A673 (cell line): ENCODE measurements at regions of chr15 and their contacts with region 1.

Region 1: GRCh38 chr15:85730001-85730820 is 64.5 kb downstream of the KLHL25 start:
- DNase-seq: peak; percentile 75
- H3K4me3 ChIP-seq: no peak overlapping the region
- H3K27ac ChIP-seq: no peak overlapping the region
- H3K4me1 ChIP-seq: no peaks in the 10 kb centered on the region
- H3K27me3 ChIP-seq: no peaks in the 10 kb centered on the region
- CTCF ChIP-seq: peak; percentile 74

Region 2: GRCh38 chr15:85485956-85486567 is 244.1 kb before region 1 on chr15:
- CTCF ChIA-PET with region 1: no interaction called
- POLR2A ChIA-PET with region 1: no interaction called
- intact Hi-C with region 1: loop called (anchors 5 kb)
- DNase-seq: peak; percentile 82
- H3K4me3 ChIP-seq: no peak overlapping the region
- H3K27ac ChIP-seq: no peak overlapping the region
- H3K4me1 ChIP-seq: peaks cover 35% of the 10 kb centered on the region
- H3K27me3 ChIP-seq: no peaks in the 10 kb centered on the region
- CTCF ChIP-seq: peak; percentile 80

Region 3: GRCh38 chr15:85831415-85832113 is 101.4 kb after region 1 on chr15:
- CTCF ChIA-PET with region 1: interaction called, 9 read pairs
- POLR2A ChIA-PET with region 1: no interaction called
- intact Hi-C with region 1: loop called (anchors 1 kb)
- DNase-seq: peak; percentile 69
- H3K4me3 ChIP-seq: no peak overlapping the region
- H3K27ac ChIP-seq: no peak overlapping the region
- H3K4me1 ChIP-seq: no peaks in the 10 kb centered on the region
- H3K27me3 ChIP-seq: no peaks in the 10 kb centered on the region
- CTCF ChIP-seq: peak; percentile 75

Region 4: DNA sequence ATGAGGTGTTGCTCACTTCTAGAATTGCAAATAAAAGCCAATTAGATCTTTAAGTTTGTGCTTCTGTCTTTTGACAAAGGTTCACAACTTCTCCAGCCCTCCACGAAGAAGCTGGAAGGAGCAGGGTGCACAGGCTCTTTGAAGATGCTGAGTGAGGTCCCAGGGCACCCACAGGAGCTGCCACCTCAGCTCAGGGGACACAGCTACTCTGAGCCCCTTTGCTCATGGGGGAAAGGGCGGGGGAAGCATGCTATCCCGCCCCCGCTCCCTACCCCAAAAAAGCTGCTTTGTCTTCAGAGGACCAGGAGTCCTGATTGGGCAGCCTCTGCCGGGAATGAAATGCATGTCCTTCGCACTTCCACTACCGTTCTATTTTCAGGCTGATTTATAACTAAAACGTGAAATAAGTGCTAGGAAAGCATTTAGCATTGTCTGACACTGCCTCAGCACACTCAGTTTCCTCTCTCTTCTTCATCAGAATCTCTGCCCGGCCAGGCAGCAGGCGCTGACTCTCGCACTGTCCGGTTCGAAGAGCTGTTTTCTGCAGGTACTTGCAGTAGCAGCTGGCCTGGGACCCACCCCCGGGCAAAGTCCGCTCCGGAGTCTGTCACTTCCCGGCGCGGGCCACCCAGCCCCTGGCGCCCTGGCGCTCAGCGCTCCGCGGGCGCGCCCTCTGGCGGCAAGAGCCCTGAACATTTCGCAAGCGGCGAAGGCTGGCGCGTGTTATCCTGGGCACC is 110.0 kb after region 1 on chr15:
- CTCF ChIA-PET with region 1: interaction called, 4 read pairs
- POLR2A ChIA-PET with region 1: no interaction called
- intact Hi-C with region 1: loop called (anchors 1 kb)
- DNase-seq: peak; percentile 80
- H3K4me3 ChIP-seq: peak overlapping the region; percentile 43
- H3K27ac ChIP-seq: no peak overlapping the region
- H3K4me1 ChIP-seq: no peaks in the 10 kb centered on the region
- H3K27me3 ChIP-seq: no peaks in the 10 kb centered on the region
- CTCF ChIP-seq: peak; percentile 97